A673 (cell line): ENCODE measurements at regions of chr3 and their contacts with region 1.

Region 1: GRCh38 chr3:100463002-100463401 is 29.4 kb upstream of the TMEM45A start:
- DNase-seq: peak; percentile 76
- H3K4me3 ChIP-seq: no peak overlapping the region
- H3K27ac ChIP-seq: no peak overlapping the region
- H3K4me1 ChIP-seq: no peaks in the 10 kb centered on the region
- H3K27me3 ChIP-seq: no peaks in the 10 kb centered on the region
- CTCF ChIP-seq: peak; percentile 83

Region 2: DNA sequence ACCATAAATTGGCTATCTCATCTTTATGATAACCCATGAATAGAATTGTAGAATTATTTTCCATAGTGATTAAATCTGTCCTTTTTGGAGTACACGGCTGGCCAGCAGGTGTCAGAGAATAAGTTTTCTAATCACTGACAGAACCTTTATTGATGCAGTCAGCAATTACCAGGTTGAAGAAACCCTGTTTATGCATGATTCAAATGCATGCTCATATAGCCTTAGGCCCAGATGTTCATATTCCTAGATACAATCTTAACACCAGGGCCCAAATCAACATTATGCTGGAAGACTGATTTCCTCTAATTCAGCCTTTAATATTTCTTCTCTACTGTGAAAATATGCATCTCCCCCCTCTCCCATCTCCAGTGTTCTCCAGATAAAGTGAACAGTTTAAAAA is 1318.0 kb before region 1 on chr3:
- CTCF ChIA-PET with region 1: no interaction called
- POLR2A ChIA-PET with region 1: no interaction called
- intact Hi-C with region 1: no loop called
- DNase-seq: no peak
- H3K4me3 ChIP-seq: no peak overlapping the region
- H3K27ac ChIP-seq: no peak overlapping the region
- H3K4me1 ChIP-seq: no peaks in the 10 kb centered on the region
- H3K27me3 ChIP-seq: no peaks in the 10 kb centered on the region
- CTCF ChIP-seq: no peak

Region 3: DNA sequence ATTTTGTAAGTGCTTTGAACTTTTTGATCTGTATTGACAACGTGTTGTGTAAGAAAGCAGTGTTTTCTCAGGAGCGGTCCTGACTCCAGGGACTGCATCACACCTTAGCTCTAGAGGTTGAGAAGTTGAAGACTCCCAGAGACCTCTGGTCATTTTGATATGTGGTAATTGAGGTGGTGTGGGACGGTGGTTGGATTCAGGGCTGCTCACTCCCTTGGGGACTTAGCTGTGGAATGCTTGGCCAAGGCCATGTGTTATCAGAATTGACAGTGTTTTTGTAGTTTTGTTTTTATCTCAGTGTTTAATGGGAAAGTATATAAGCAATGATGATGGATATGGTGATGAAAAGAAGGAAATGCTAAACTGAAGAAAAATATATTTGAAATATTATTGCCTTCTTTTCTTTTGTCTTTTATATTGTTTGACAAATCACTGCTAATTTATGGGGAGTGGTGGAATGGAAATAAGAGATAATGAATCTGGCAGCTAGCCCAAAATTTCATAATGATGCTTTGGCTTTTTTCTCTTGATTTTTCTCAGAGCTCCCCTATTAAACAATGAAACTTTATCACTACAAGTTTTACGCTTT is 629.3 kb before region 1 on chr3:
- CTCF ChIA-PET with region 1: no interaction called
- POLR2A ChIA-PET with region 1: no interaction called
- intact Hi-C with region 1: loop called (anchors 10 kb)
- DNase-seq: no peak
- H3K4me3 ChIP-seq: no peak overlapping the region
- H3K27ac ChIP-seq: no peak overlapping the region
- H3K4me1 ChIP-seq: peaks cover 15% of the 10 kb centered on the region
- H3K27me3 ChIP-seq: no peaks in the 10 kb centered on the region
- CTCF ChIP-seq: no peak

Region 4: DNA sequence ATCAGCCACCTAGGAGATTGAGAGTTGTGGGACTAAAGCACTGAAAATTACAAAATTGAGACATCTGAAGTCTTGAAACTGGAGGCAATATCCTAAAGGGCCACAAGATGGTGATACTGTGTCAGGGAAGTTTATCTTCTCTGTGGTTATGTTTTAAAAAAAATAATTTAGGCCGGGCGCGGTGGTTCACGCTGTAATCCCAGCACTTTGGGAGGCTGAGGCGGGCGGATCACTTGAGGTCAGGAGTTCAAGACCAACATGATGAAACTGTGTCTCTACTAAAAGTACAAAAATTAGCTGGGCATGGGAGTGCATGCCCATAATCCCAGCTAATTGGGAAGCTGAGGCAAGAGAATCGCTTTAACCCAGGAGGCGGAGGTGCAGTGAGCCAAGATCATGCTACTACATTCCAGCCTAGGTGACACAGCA is 146.3 kb before region 1 on chr3:
- CTCF ChIA-PET with region 1: no interaction called
- POLR2A ChIA-PET with region 1: no interaction called
- intact Hi-C with region 1: loop called (anchors 10 kb)
- DNase-seq: peak; percentile 77
- H3K4me3 ChIP-seq: no peak overlapping the region
- H3K27ac ChIP-seq: no peak overlapping the region
- H3K4me1 ChIP-seq: peaks cover 3% of the 10 kb centered on the region
- H3K27me3 ChIP-seq: no peaks in the 10 kb centered on the region
- CTCF ChIP-seq: peak; percentile 70

Region 5: DNA sequence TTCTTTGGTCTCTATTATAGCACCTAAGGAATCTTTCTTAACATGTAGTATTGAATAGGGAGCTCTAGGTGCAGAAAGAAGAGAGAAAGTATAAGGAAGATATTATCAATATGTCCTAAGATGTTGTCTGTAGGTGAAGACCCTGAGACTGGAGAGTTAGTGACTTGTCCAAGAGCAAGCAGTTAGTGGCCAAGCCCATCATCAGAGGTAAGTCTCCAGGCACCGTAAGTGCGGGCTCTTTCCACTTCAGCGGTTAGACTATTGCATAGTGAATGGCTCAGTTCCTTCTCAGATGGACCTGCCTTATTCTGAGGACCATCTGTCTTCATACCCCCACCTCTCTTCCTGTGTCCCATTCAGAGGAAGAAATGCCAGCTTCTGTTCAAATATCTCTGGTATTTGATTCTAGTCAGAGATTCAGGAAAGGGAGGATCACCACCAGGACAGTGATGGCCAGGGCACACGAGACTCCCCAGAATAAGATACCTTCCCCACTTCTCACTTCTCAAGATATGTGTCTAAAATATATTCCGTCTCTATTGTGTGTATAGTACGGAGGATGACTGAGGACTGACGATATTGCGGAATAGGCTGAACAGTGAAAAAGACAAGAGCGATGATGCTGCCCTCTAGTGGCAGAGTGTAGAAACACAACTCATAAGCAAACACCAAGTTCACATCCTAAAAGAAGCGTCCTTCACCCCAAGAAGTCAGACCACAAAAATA is 127.3 kb after region 1 on chr3:
- CTCF ChIA-PET with region 1: interaction called, 25 read pairs
- POLR2A ChIA-PET with region 1: no interaction called
- intact Hi-C with region 1: loop called (anchors 1 kb)
- DNase-seq: peak; percentile 83
- H3K4me3 ChIP-seq: no peak overlapping the region
- H3K27ac ChIP-seq: no peak overlapping the region
- H3K4me1 ChIP-seq: peaks cover 5% of the 10 kb centered on the region
- H3K27me3 ChIP-seq: no peaks in the 10 kb centered on the region
- CTCF ChIP-seq: peak; percentile 92

Region 6: GRCh38 chr3:100634493-100635272 is 171.7 kb after region 1 on chr3:
- CTCF ChIA-PET with region 1: interaction called, 20 read pairs
- POLR2A ChIA-PET with region 1: no interaction called
- intact Hi-C with region 1: loop called (anchors 2 kb)
- DNase-seq: peak; percentile 68
- H3K4me3 ChIP-seq: no peak overlapping the region
- H3K27ac ChIP-seq: no peak overlapping the region
- H3K4me1 ChIP-seq: no peaks in the 10 kb centered on the region
- H3K27me3 ChIP-seq: no peaks in the 10 kb centered on the region
- CTCF ChIP-seq: peak; percentile 54

Region 7: DNA sequence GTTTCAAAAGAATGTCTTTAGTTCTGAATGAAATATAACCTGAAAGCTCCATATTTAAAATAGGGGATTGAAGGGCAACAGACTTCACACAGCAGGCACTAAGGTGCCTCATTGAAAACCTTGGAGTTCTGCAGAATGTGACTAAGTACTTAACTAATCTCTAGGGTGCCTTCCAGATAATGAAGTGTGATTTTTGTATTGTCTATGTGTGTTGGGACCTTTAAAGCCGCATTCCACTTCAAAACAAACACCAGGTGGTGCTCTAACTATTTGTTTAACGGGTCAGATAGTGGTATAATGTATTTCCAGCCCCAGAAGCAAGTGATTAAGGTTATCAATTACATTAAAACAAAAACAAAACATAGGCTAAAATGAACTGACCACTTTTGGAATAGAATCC is 274.3 kb after region 1 on chr3:
- CTCF ChIA-PET with region 1: no interaction called
- POLR2A ChIA-PET with region 1: no interaction called
- intact Hi-C with region 1: loop called (anchors 10 kb)
- DNase-seq: peak; percentile 57
- H3K4me3 ChIP-seq: no peak overlapping the region
- H3K27ac ChIP-seq: no peak overlapping the region
- H3K4me1 ChIP-seq: no peaks in the 10 kb centered on the region
- H3K27me3 ChIP-seq: no peaks in the 10 kb centered on the region
- CTCF ChIP-seq: peak; percentile 54

Region 8: DNA sequence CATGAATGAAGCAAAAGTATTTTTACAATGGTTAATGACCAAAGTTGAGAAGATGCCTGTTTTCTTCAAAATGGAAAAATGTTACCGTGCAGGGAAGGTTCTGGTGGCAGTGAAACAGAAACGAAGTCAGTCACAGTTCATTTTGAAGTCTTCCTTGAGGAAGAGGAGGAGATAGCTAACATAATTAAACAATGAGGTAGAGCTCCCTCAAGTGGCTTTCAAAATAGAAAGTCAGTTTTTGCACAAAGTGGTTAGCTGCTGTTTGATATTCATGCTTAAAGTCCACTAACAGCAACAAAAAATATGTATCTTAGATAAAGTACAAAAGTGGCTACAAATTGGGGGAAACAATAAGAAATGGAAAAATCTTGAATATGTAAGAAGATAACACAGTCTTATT is 333.6 kb after region 1 on chr3:
- CTCF ChIA-PET with region 1: interaction called, 4 read pairs
- POLR2A ChIA-PET with region 1: no interaction called
- intact Hi-C with region 1: loop called (anchors 5 kb)
- DNase-seq: peak; percentile 51
- H3K4me3 ChIP-seq: no peak overlapping the region
- H3K27ac ChIP-seq: no peak overlapping the region
- H3K4me1 ChIP-seq: peaks cover 19% of the 10 kb centered on the region
- H3K27me3 ChIP-seq: no peaks in the 10 kb centered on the region
- CTCF ChIP-seq: peak; percentile 64

Region 9: DNA sequence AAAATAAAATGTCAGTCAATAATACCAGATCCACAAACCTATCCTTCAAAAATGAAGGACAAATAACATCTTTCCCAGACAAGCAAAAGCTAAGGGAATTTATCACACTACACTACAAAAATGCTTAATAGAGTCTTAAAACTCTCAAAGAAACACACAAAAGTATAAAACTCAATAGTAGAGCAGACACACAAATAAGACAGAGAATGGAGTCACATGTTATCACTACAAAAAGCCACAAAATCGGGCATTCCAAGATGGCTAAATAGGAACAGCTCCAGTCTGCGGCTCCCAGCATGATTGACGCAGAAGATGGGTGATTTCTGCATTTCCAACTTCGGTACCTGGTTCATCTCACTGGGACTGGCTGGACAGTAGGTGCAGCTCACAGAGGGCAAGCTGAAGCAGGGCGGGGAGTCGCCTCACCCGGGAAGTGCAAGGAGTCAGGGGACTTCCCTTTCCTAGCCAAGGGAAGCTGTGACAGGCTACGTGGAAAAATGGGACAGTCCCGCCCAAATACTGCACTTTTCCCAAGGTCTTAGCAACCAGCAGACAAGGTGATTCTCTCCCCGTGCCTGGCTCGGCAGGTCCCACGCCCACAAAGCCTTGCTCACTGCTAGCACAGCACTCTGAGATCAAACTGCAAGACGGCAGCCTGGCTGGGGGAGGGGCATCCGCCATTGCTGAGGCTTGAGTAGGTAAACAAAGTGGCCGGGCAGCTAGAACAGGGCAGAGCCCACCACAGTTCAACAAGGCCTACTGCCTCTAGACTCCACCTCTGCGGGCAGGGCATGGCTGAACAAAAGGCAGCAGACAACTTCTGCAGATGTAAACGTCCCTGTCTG is 1003.7 kb after region 1 on chr3:
- CTCF ChIA-PET with region 1: no interaction called
- POLR2A ChIA-PET with region 1: no interaction called
- intact Hi-C with region 1: no loop called
- DNase-seq: no peak
- H3K4me3 ChIP-seq: no peak overlapping the region
- H3K27ac ChIP-seq: no peak overlapping the region
- H3K4me1 ChIP-seq: no peaks in the 10 kb centered on the region
- H3K27me3 ChIP-seq: no peaks in the 10 kb centered on the region
- CTCF ChIP-seq: no peak